Activated T-helper 2 cell treated with anti-CD3 and anti-CD28 coated beads, Interferon-gamma antibody, Interleukin-2, Interleukin-4, amounts not matched to agents 10 μg/mL and 5 μg/mL and 100 μg/mL, durations not matched to agents 14 hours and 24 hours and 36 hours (primary cell): ENCODE measurements at regions of chr21 and their contacts with region 1.

Region 1: GRCh38 chr21:29298348-29299045 is at the start of gene BACH1:
- DNase-seq: peak; percentile 78
- H3K4me3 Mint-ChIP-seq: peak within 1 kb of the TSS; percentile 93
- H3K27ac Mint-ChIP-seq: peak within 1 kb of the TSS; percentile 91
- H3K4me1 Mint-ChIP-seq: peaks cover 43% of the 10 kb centered on the region
- H3K27me3 Mint-ChIP-seq: peaks cover 11% of the 10 kb centered on the region
- total RNA-seq, gene BACH1: 35.2 and 37.9 TPM in 2 replicates

Region 2: GRCh38 chr21:29073222-29074006 is 225.1 kb before region 1 on chr21 and contains the start of gene CCT8:
- intact Hi-C with region 1: loop called (anchors 1 kb)
- DNase-seq: peak; percentile 99
- H3K4me3 Mint-ChIP-seq: peak within 1 kb of the TSS; percentile 99
- H3K27ac Mint-ChIP-seq: peak within 1 kb of the TSS; percentile 98
- H3K4me1 Mint-ChIP-seq: peaks cover 43% of the 10 kb centered on the region
- H3K27me3 Mint-ChIP-seq: no peaks in the 10 kb centered on the region
- total RNA-seq, gene CCT8: 366 and 387 TPM in 2 replicates

Region 3: GRCh38 chr21:29195981-29196669 is 102.4 kb before region 1 on chr21:
- intact Hi-C with region 1: loop called (anchors 1 kb)
- DNase-seq: peak; percentile 64
- H3K4me3 Mint-ChIP-seq: peak overlapping the region; percentile 80
- H3K27ac Mint-ChIP-seq: peak overlapping the region; percentile 80
- H3K4me1 Mint-ChIP-seq: peaks cover 32% of the 10 kb centered on the region
- H3K27me3 Mint-ChIP-seq: no peaks in the 10 kb centered on the region

Region 4: GRCh38 chr21:29245104-29245643 is 53.3 kb before region 1 on chr21:
- intact Hi-C with region 1: loop called (anchors 1 kb)
- DNase-seq: no peak
- H3K4me3 Mint-ChIP-seq: no peak overlapping the region
- H3K27ac Mint-ChIP-seq: peak overlapping the region; percentile 17
- H3K4me1 Mint-ChIP-seq: peaks cover 9% of the 10 kb centered on the region
- H3K27me3 Mint-ChIP-seq: peaks cover 29% of the 10 kb centered on the region

Region 5: DNA sequence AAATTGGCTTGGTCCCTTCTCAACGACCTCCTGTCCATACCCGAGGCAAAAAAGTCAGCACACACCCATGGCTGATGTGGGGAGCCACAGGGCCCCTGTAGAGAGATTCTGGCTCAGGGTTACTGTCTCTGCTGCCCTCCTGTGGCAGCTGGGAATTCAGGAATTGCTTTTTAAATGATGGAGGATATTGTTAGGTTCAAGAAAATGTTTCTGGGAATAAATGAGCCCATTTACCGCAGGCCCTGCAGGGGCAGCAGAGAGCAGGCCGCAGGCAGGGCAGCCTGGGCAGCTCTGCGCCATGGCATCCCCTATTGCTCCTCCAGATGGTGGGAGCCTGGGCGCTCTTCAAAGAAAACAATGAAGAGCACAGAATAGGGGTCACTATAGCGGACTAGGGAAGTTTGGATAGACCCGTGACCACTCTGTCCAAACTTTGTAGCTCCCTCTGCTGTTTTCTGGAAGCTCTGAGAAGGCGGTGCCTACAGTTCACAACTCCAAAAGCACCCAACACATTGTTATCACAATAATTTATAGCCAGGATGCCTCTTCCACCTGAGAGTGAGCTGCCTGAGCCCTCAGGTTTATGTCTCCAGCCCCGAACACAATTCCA is 201.3 kb after region 1 on chr21:
- intact Hi-C with region 1: no loop called
- DNase-seq: no peak
- H3K4me3 Mint-ChIP-seq: no peak overlapping the region
- H3K27ac Mint-ChIP-seq: no peak overlapping the region
- H3K4me1 Mint-ChIP-seq: no peaks in the 10 kb centered on the region
- H3K27me3 Mint-ChIP-seq: no peaks in the 10 kb centered on the region